ENCODE measurements at regions of chr19 and their contacts with region 1.

Region 1: GRCh38 chr19:2594319-2594718 is 108.2 kb downstream of the GNG7 start:
- DNase-seq: no peak
- ATAC-seq: peak; percentile 46
- H3K4me3 ChIP-seq: no peak overlapping the region
- H3K4me3 Mint-ChIP-seq: peak overlapping the region; percentile 59
- H3K27ac ChIP-seq: no peak overlapping the region
- H3K27ac Mint-ChIP-seq: peak overlapping the region; percentile 78
- H3K4me1 ChIP-seq: peaks cover 7 to 8% of the 10 kb centered on the region in 2 donors
- H3K4me1 Mint-ChIP-seq: peaks cover 44% of the 10 kb centered on the region
- H3K27me3 ChIP-seq: no peaks in the 10 kb centered on the region
- H3K27me3 Mint-ChIP-seq: no peaks in the 10 kb centered on the region
- CTCF ChIP-seq: no peak

Region 2: DNA sequence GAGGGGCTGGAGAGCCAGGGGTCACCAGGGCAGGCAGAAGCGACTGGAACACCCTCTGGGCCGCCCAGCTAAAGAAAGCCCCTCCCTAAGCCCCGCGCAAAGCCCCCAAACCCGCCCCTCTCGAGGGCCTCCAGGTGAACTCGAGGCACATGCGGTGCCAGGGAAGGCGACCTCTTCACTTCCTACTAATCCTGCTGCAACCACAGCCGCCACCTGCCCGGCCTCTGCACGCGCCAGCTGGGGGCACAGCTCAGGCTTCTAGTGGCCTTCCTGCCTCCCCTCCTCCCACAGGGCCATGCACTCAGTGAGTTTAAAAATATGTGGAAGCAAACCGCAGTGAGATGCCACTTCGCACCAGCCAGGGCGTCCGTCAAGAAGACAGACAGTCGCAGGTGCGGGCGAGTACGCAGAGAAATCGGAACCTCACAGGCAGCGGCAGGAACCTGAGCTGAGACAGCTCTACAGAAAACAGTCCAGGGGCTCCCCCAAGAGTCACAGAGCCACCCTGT is 148.0 kb before region 1 on chr19:
- CTCF ChIA-PET with region 1: no interaction called
- POLR2A ChIA-PET with region 1: no interaction called
- intact Hi-C with region 1: no loop called
- DNase-seq: peak; percentile 72
- ATAC-seq: peak; percentile 78
- H3K4me3 ChIP-seq: peak overlapping the region in 3 of 5 experiments; percentile 28 to 59 (median 32)
- H3K4me3 Mint-ChIP-seq: peak overlapping the region; percentile 88
- H3K27ac ChIP-seq: no peak overlapping the region
- H3K27ac Mint-ChIP-seq: peak overlapping the region; percentile 79
- H3K4me1 ChIP-seq: peaks cover 6 to 11% of the 10 kb centered on the region in 2 donors
- H3K4me1 Mint-ChIP-seq: peaks cover 12% of the 10 kb centered on the region
- H3K27me3 ChIP-seq: no peaks in the 10 kb centered on the region
- H3K27me3 Mint-ChIP-seq: no peaks in the 10 kb centered on the region
- CTCF ChIP-seq: no peak

Region 3: DNA sequence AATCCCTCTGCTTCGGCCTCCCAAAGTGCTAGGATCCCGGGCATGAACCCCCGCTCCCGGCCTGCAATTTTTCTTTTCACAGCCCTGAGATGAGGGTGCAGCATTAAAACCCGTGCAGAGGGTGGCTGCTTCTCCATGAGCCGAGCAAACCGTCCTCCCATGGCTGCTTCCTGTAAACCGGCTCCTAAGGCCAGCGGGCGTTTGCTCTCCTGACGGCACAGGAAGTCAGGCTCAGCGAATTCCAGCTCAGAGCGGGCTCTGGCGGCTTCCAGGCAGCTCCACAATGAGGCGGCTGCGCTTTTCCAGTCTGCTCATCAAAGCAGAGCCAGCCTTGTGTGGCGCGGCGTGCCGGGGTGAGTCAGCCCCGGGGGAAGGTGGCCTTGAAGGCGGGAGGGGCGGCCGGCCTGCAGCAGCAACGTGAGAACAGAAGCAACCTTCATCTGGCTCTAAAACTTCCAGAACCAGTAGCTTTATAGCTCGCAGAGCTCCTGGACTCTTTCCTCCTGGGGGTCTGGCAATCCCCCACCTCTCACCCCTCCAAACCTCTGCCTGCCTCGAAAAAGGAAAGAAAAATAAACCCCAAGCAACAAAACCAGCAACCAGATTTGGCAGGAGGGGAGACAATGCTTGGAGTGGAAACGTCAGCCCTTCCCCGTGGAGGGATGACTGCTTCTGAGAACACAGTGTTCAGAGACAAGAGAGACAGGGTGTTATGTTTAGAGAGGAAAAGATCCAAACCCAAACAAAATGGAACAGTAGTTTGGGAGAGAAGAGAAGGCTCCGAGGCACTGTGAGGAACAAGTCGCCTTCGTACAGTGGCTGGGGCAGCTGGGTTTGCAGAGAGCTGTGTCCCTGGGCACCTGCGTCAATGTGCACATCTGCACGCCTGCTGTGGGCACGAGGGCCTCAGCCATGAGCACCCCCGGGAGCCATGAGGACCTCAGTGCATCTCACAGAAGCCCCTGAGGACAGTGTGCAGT is 50.6 kb before region 1 on chr19:
- CTCF ChIA-PET with region 1: no interaction called
- POLR2A ChIA-PET with region 1: interaction called, 4 read pairs
- intact Hi-C with region 1: loop called (anchors 10 kb)
- DNase-seq: peak; percentile 50
- ATAC-seq: peak; percentile 74
- H3K4me3 ChIP-seq: peak overlapping the region in 2 of 5 experiments; percentile 7 to 8
- H3K4me3 Mint-ChIP-seq: peak overlapping the region; percentile 65
- H3K27ac ChIP-seq: no peak overlapping the region
- H3K27ac Mint-ChIP-seq: peak overlapping the region; percentile 57
- H3K4me1 ChIP-seq: peaks cover 19 to 24% of the 10 kb centered on the region in 2 donors
- H3K4me1 Mint-ChIP-seq: peaks cover 32% of the 10 kb centered on the region
- H3K27me3 ChIP-seq: no peaks in the 10 kb centered on the region
- H3K27me3 Mint-ChIP-seq: no peaks in the 10 kb centered on the region
- CTCF ChIP-seq: no peak

Region 4: DNA sequence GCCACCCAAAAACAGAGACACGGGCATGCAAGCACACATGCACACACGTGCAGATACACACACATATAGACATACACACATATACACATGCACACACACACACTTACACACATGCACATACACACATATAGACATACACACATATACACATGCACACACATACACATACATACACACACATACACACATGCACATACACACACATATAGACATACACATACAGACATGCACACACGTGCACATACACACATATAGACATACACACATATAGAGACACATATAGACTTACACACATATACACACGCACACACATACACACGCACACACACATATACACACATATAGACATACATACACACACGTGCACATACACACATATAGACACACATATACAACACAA is 26.3 kb before region 1 on chr19:
- CTCF ChIA-PET with region 1: no interaction called
- POLR2A ChIA-PET with region 1: no interaction called
- intact Hi-C with region 1: no loop called
- DNase-seq: no peak
- ATAC-seq: no peak
- H3K4me3 ChIP-seq: no peak overlapping the region
- H3K4me3 Mint-ChIP-seq: no peak overlapping the region
- H3K27ac ChIP-seq: no peak overlapping the region
- H3K27ac Mint-ChIP-seq: no peak overlapping the region
- H3K4me1 ChIP-seq: peaks cover 0 to 9% of the 10 kb centered on the region in 2 donors
- H3K4me1 Mint-ChIP-seq: peaks cover 43% of the 10 kb centered on the region
- H3K27me3 ChIP-seq: no peaks in the 10 kb centered on the region
- H3K27me3 Mint-ChIP-seq: no peaks in the 10 kb centered on the region
- CTCF ChIP-seq: no peak

Measured in B cell (primary cell).